ENCODE measurements at regions of chr3 and their contacts with region 1.

Region 1: DNA sequence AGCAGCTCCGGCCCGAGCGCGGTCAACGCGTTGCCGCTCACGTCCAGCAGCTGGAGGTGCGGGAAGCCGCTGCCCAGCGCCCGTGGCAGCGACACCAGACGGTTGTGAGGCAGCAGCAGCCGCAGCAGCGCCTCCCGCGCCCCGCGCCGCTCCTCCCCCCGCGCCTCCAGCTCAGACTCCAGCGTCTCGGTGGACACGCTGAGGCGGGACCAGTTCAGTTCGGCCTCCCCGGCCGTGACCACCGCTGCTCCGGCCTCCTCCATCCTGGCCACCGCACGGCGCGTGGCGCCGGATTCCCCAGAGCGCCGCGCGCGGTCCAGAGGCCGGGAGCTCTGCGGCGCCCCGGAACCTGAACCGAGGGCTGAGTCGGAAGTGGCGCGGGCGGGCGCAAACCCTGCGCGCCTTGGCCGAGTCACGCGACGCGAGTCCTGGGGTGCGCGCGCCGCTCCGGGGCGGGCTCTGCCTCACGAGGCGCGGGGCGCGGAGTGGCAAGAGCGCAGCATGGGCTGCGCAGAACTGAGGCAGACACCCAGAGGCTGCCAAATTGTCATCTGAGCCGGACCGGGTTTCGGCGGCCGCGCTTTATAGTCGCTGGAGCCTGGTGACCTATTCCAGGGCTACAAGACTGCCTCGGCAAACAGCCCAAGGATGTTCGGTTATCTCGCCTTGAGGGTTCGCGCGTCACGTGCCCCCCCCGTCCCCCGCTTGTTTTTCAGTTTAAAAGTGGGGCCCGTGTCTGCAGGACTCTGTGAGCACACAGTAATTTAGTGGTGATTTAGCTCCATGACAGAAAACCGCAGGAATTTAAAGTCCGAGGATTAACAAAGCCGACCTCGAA is at the start of gene LRRC58:
- DNase-seq: peak; percentile 99
- ATAC-seq: peak; percentile 91
- H3K4me3 ChIP-seq: peak within 1 kb of the TSS; percentile 74
- H3K27ac ChIP-seq: peak within 1 kb of the TSS; percentile 51
- H3K4me1 ChIP-seq: peaks cover 41% of the 10 kb centered on the region
- H3K27me3 ChIP-seq: no peaks in the 10 kb centered on the region
- CTCF ChIP-seq: peak; percentile 52
- total RNA-seq, gene LRRC58: 33.7 and 35.2 TPM in 2 replicates

Region 2: GRCh38 chr3:119657887-119658702 is 691.1 kb before region 1 on chr3:
- CTCF ChIA-PET with region 1: no interaction called
- POLR2A ChIA-PET with region 1: no interaction called
- intact Hi-C with region 1: no loop called
- DNase-seq: no peak
- ATAC-seq: no peak
- H3K4me3 ChIP-seq: no peak overlapping the region
- H3K27ac ChIP-seq: no peak overlapping the region
- H3K4me1 ChIP-seq: peaks cover 22% of the 10 kb centered on the region
- H3K27me3 ChIP-seq: no peaks in the 10 kb centered on the region
- CTCF ChIP-seq: no peak

Region 3: GRCh38 chr3:120284747-120285507 is 64.3 kb before region 1 on chr3 and contains the start of gene GPR156:
- CTCF ChIA-PET with region 1: no interaction called
- POLR2A ChIA-PET with region 1: no interaction called
- intact Hi-C with region 1: loop called (anchors 2 kb)
- DNase-seq: peak; percentile 54
- ATAC-seq: peak; percentile 87
- H3K4me3 ChIP-seq: peak within 1 kb of the TSS; percentile 79
- H3K27ac ChIP-seq: no peak within 1 kb of the TSS
- H3K4me1 ChIP-seq: peaks cover 9% of the 10 kb centered on the region; the same call in 1 of the 2 replicates
- H3K27me3 ChIP-seq: no peaks in the 10 kb centered on the region
- CTCF ChIP-seq: no peak
- total RNA-seq, gene GPR156: 5.1 and 7.7 TPM in 2 replicates

Region 4: GRCh38 chr3:120311863-120312794 is 37.1 kb before region 1 on chr3:
- CTCF ChIA-PET with region 1: no interaction called
- POLR2A ChIA-PET with region 1: interaction called, 11 read pairs
- intact Hi-C with region 1: no loop called
- DNase-seq: no peak
- ATAC-seq: no peak
- H3K4me3 ChIP-seq: no peak overlapping the region
- H3K27ac ChIP-seq: no peak overlapping the region
- H3K4me1 ChIP-seq: no peaks in the 10 kb centered on the region
- H3K27me3 ChIP-seq: no peaks in the 10 kb centered on the region
- CTCF ChIP-seq: no peak